Activated B cell treated with CpG ODN at 0.5 μM for 24 hours (primary cell): ENCODE measurements at regions of chr2 and their contacts with region 1.

Region 1: DNA sequence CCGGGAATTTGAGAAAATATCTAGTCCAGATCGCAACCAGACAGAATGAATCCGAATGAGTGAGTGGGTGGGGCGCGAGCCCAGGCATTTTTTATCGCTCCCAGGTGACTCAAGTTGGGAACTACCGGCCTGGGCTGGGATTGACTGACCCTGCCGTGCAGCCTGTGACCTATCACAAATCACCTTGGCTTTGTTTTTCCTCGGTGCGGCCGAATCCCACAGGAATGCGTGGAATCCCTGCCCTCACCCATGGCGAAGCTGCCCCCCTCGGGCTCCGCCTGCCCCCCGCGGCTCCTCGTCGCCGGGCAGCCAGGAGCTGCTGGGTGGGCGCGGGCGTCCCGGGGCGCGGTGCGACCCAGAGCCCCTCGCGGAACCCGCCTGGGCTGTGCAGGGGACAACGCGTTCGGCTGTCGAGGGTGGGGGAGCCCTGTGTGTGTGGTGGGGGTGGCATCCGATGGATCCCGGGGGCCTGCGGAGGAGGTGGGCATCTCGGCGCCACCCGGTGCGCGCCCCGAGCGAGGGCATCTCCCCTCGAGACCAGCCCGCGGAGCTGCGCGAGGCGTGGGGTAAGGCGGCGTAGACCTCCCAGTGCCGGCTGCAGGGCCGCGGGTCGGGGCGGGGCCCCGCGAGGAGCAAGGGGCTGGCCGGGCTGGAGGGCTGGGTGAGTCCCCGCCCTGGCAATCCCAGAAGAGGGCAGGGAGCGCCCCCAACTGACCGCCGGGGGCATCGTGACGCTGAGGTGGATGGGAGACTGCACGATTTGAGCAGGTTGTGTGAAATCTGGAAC is 16.5 kb downstream of the B3GNT7 start:
- DNase-seq: peak; percentile 86
- ATAC-seq: peak; percentile 100
- H3K4me3 Mint-ChIP-seq: peak overlapping the region; percentile 56
- H3K27ac Mint-ChIP-seq: no peak overlapping the region
- H3K4me1 Mint-ChIP-seq: peaks cover 9% of the 10 kb centered on the region
- H3K27me3 Mint-ChIP-seq: peaks cover 13% of the 10 kb centered on the region
- CTCF ChIP-seq: no peak

Region 2: GRCh38 chr2:231245253-231246094 is 166.6 kb before region 1 on chr2:
- CTCF ChIA-PET with region 1: interaction called, 4 read pairs
- POLR2A ChIA-PET with region 1: no interaction called
- intact Hi-C with region 1: loop called (anchors 1 kb)
- DNase-seq: no peak
- ATAC-seq: peak; percentile 62
- H3K4me3 Mint-ChIP-seq: no peak overlapping the region
- H3K27ac Mint-ChIP-seq: no peak overlapping the region
- H3K4me1 Mint-ChIP-seq: no peaks in the 10 kb centered on the region
- H3K27me3 Mint-ChIP-seq: no peaks in the 10 kb centered on the region
- CTCF ChIP-seq: no peak

Region 3: GRCh38 chr2:231315896-231316295 is 96.1 kb before region 1 on chr2:
- CTCF ChIA-PET with region 1: no interaction called
- POLR2A ChIA-PET with region 1: no interaction called
- intact Hi-C with region 1: no loop called
- DNase-seq: no peak
- ATAC-seq: peak; percentile 63
- H3K4me3 Mint-ChIP-seq: peak overlapping the region; percentile 20
- H3K27ac Mint-ChIP-seq: peak overlapping the region; percentile 76
- H3K4me1 Mint-ChIP-seq: peaks cover 50% of the 10 kb centered on the region
- H3K27me3 Mint-ChIP-seq: no peaks in the 10 kb centered on the region
- CTCF ChIP-seq: no peak

Region 4: DNA sequence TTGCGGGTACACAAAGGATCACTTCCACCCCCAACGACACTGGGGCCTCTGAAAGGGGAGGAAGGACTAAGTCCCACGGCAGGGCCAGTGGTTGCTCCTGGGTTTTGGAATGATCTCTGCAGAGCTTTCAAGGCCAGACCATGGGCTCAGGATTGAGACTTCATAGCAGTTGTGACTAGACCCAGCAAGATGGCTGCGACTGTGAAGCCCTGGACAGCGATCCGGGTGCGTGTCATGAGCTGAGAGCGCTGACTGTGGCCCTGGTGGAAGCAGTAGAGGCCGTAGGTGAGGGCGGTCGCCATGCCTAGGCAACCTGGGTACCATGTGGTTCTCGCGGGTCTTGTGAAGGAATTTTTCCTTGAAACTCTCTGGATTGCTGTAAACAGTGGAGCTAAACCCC is 24.9 kb after region 1 on chr2:
- CTCF ChIA-PET with region 1: no interaction called
- POLR2A ChIA-PET with region 1: no interaction called
- intact Hi-C with region 1: no loop called
- DNase-seq: no peak
- ATAC-seq: no peak
- H3K4me3 Mint-ChIP-seq: no peak overlapping the region
- H3K27ac Mint-ChIP-seq: no peak overlapping the region
- H3K4me1 Mint-ChIP-seq: no peaks in the 10 kb centered on the region
- H3K27me3 Mint-ChIP-seq: no peaks in the 10 kb centered on the region
- CTCF ChIP-seq: no peak

Region 5: DNA sequence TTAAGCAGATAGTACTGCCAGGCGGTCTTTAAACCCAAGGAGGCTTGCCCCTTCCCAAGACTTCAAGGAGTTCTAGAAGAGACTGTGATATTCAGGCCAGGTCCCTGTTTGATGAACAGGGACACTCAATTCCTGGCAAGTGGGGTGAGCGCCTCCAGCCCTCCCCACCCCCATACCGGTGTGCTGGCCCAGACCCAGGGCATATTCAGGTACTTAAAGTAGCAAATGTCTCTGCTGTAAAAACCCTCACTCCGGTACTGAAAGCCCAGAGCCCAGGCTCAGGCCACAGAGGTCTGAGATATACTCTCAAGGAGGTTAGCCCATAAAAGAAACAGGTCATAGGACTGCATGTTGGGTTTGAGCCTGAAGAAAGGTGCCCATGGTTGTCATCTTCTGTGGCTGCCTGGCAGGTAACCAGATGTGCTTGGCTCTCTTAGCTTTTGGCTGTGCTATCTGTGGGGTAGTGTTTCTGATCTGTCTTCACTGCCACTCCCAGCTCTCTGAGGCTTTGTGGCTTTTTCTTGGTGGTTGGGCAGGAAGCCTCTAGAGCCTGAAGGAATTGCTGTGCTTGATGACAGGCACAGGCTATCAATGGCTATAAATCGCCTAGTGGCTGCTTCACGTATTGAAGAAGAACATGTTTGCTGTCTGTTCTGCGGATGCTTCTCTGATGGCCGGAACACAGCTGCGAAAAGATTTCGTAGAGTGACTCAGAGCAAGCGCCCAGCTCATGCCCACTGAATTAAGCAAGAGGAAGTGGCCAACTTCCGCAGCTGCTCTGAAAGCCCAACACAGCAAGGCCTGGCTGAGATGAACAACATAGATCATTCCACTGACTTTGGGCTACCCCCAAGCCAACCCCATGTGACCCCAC is 903.3 kb after region 1 on chr2:
- CTCF ChIA-PET with region 1: no interaction called
- POLR2A ChIA-PET with region 1: no interaction called
- intact Hi-C with region 1: no loop called
- DNase-seq: peak; percentile 41
- ATAC-seq: peak; percentile 96
- H3K4me3 Mint-ChIP-seq: peak overlapping the region; percentile 59
- H3K27ac Mint-ChIP-seq: peak overlapping the region; percentile 79
- H3K4me1 Mint-ChIP-seq: peaks cover 30% of the 10 kb centered on the region
- H3K27me3 Mint-ChIP-seq: no peaks in the 10 kb centered on the region
- CTCF ChIP-seq: no peak